ENCODE measurements at regions of chr6 and their contacts with region 1.

Region 1: DNA sequence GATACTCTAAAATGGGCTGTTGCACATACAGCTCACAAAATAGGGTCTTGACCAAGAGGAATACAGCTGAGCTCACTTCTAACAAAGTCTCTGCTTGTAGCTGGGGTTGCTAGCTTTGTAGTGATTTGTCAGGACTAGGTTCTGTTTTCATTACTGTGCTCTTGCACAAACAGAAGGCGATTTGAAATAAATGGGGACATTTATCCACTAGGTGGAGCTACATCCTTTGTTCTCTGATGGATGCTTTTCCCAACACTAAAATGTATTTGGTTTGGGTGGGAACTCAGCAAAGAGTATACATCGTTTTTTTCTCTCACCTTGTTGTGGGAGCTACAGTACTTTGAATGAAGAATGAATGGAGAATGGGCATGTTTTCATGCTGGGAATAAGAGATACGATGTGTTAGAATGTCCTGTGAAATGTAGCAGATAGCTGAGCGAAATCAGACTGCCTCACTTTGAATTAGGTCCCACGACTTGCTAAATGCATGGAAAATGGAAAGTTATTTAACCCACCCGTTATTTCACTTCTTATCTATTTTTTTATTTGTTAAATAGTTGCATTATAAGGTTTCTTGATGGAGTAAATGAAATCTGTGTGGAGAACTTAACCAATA is 494.7 kb upstream of the MAP3K7 start:
- DNase-seq: peak; percentile 7
- H3K4me3 Mint-ChIP-seq: no peak overlapping the region
- H3K27ac Mint-ChIP-seq: no peak overlapping the region
- H3K4me1 Mint-ChIP-seq: no peaks in the 10 kb centered on the region
- H3K27me3 Mint-ChIP-seq: no peaks in the 10 kb centered on the region
- CTCF ChIP-seq: no peak

Region 2: DNA sequence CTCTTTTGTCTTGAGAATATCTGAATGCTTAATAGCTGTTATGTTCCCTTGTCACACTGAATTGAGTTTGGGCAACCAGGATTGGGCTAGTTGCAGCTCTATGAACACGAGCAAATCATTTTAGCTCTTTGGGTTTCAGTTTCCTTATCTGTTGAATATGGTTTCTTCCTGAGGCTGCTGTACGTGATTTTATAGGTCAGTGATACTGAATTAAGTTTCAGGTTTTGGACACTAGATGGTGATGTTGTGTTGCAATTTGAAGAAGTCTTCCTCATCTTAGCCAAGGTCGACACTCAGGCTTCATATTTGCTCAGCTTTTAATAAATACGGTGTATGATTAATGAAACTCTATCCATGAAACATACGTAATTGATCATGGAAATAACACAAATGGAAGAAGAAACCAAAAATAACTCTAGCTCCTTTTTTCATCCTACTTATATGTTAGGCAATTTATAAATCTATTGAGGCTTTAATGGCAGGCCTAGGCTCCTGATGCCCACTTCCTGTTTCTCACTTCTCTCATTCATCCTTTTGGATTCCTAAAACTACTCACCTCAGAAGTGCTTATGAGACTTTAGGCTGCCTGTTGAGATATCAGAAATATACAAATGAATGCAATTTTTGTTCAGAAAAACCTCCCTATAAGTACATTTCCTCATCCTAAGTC is 140.6 kb before region 1 on chr6:
- CTCF ChIA-PET with region 1: no interaction called
- intact Hi-C with region 1: loop called (anchors 5 kb)
- DNase-seq: no peak
- H3K4me3 Mint-ChIP-seq: no peak overlapping the region
- H3K27ac Mint-ChIP-seq: no peak overlapping the region
- H3K4me1 Mint-ChIP-seq: no peaks in the 10 kb centered on the region
- H3K27me3 Mint-ChIP-seq: no peaks in the 10 kb centered on the region
- CTCF ChIP-seq: no peak

Region 3: GRCh38 chr6:92122746-92123145 is 1041.2 kb after region 1 on chr6:
- CTCF ChIA-PET with region 1: no interaction called
- intact Hi-C with region 1: loop called (anchors 5 kb)
- DNase-seq: no peak
- H3K4me3 Mint-ChIP-seq: no peak overlapping the region
- H3K27ac Mint-ChIP-seq: no peak overlapping the region
- H3K4me1 Mint-ChIP-seq: no peaks in the 10 kb centered on the region
- H3K27me3 Mint-ChIP-seq: no peaks in the 10 kb centered on the region
- CTCF ChIP-seq: no peak